ENCODE measurements at regions of chr17 and their contacts with region 1.

Region 1: DNA sequence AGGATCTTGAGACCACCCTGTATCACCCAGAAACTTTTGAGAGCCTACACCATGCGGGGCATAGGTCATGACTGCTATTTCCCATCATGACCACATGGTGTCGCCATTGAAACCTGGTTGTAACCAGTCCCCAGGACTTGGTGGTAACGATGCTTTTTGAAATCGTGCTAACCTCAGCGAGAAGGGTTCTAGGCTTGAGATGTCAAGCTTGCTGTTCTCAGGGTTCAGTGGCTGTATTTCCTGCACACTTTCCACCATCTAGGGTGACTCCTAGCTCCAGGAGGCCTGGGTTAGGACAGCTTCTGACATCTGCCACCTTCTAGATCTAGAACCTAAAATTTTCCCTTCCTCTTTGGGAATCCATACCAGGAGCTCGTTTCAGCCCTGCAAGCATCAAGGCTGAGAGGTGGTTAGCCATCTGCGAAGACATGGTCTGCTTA is 13.0 kb upstream of the SPNS3 start:
- DNase-seq: peak; percentile 48 to 54
- H3K4me3 ChIP-seq: no peak overlapping the region
- H3K4me3 Mint-ChIP-seq: no peak overlapping the region
- H3K27ac Mint-ChIP-seq: no peak overlapping the region
- H3K4me1 ChIP-seq: no peaks in the 10 kb centered on the region
- H3K4me1 Mint-ChIP-seq: no peaks in the 10 kb centered on the region
- H3K27me3 ChIP-seq: no peaks in the 10 kb centered on the region
- H3K27me3 Mint-ChIP-seq: no peaks in the 10 kb centered on the region
- CTCF ChIP-seq: peak; percentile 55 to 57

Region 2: GRCh38 chr17:4375039-4375748 is 45.5 kb before region 1 on chr17:
- CTCF ChIA-PET with region 1: no interaction called
- POLR2A ChIA-PET with region 1: no interaction called
- intact Hi-C with region 1: no loop called
- DNase-seq: no peak
- H3K4me3 ChIP-seq: no peak overlapping the region
- H3K4me3 Mint-ChIP-seq: no peak overlapping the region
- H3K27ac Mint-ChIP-seq: no peak overlapping the region
- H3K4me1 ChIP-seq: no peaks in the 10 kb centered on the region
- H3K4me1 Mint-ChIP-seq: peaks cover 6% of the 10 kb centered on the region
- H3K27me3 ChIP-seq: no peaks in the 10 kb centered on the region
- H3K27me3 Mint-ChIP-seq: no peaks in the 10 kb centered on the region
- CTCF ChIP-seq: no peak

Region 3: GRCh38 chr17:4492721-4493561 is 72.2 kb after region 1 on chr17:
- CTCF ChIA-PET with region 1: interaction called, 4 read pairs
- POLR2A ChIA-PET with region 1: no interaction called
- intact Hi-C with region 1: loop called (anchors 5 kb)
- DNase-seq: peak; percentile 78 to 82
- H3K4me3 ChIP-seq: no peak overlapping the region
- H3K4me3 Mint-ChIP-seq: no peak overlapping the region
- H3K27ac Mint-ChIP-seq: no peak overlapping the region
- H3K4me1 ChIP-seq: no peaks in the 10 kb centered on the region
- H3K4me1 Mint-ChIP-seq: peaks cover 21% of the 10 kb centered on the region
- H3K27me3 ChIP-seq: no peaks in the 10 kb centered on the region
- H3K27me3 Mint-ChIP-seq: no peaks in the 10 kb centered on the region
- CTCF ChIP-seq: no peak

Region 4: GRCh38 chr17:4540224-4540641 is 119.5 kb after region 1 on chr17:
- CTCF ChIA-PET with region 1: interaction called, 3 read pairs
- POLR2A ChIA-PET with region 1: no interaction called
- intact Hi-C with region 1: loop called (anchors 5 kb)
- DNase-seq: no peak
- H3K4me3 ChIP-seq: no peak overlapping the region
- H3K4me3 Mint-ChIP-seq: no peak overlapping the region
- H3K27ac Mint-ChIP-seq: no peak overlapping the region
- H3K4me1 ChIP-seq: no peaks in the 10 kb centered on the region
- H3K4me1 Mint-ChIP-seq: no peaks in the 10 kb centered on the region
- H3K27me3 ChIP-seq: no peaks in the 10 kb centered on the region
- H3K27me3 Mint-ChIP-seq: no peaks in the 10 kb centered on the region
- CTCF ChIP-seq: peak in 1 of 2 experiments; percentile 46

Measured in Caco-2 (cell line).